ENCODE measurements at regions of chr14 and their contacts with region 1.

Region 1: GRCh38 chr14:75258615-75259466 is 19.8 kb upstream of the FOS start:
- DNase-seq: peak; percentile 100
- H3K4me3 ChIP-seq: peak overlapping the region in 2 of 3 experiments; percentile 21 to 39
- H3K27ac ChIP-seq: peak overlapping the region; percentile 75
- H3K4me1 ChIP-seq: peaks cover 32% of the 10 kb centered on the region
- H3K27me3 ChIP-seq: no peaks in the 10 kb centered on the region
- CTCF ChIP-seq: no peak
- POLR2A ChIP-seq: peak; percentile 7

Region 2: GRCh38 chr14:75126679-75127473 is 132.0 kb before region 1 on chr14 and contains the start of gene NEK9:
- CTCF ChIA-PET with region 1: no interaction called
- POLR2A ChIA-PET with region 1: no interaction called
- dilution Hi-C with region 1: no loop called
- intact Hi-C with region 1: loop called (anchors 1 kb)
- DNase-seq: peak; percentile 89
- H3K4me3 ChIP-seq: peak within 1 kb of the TSS; percentile 36 to 69 (median 62)
- H3K27ac ChIP-seq: peak within 1 kb of the TSS; percentile 95
- H3K4me1 ChIP-seq: peaks cover 45% of the 10 kb centered on the region
- H3K27me3 ChIP-seq: no peaks in the 10 kb centered on the region
- CTCF ChIP-seq: no peak
- POLR2A ChIP-seq: peak; percentile 93
- total RNA-seq, gene NEK9: 65.1 and 69.6 TPM in 2 replicates

Region 3: DNA sequence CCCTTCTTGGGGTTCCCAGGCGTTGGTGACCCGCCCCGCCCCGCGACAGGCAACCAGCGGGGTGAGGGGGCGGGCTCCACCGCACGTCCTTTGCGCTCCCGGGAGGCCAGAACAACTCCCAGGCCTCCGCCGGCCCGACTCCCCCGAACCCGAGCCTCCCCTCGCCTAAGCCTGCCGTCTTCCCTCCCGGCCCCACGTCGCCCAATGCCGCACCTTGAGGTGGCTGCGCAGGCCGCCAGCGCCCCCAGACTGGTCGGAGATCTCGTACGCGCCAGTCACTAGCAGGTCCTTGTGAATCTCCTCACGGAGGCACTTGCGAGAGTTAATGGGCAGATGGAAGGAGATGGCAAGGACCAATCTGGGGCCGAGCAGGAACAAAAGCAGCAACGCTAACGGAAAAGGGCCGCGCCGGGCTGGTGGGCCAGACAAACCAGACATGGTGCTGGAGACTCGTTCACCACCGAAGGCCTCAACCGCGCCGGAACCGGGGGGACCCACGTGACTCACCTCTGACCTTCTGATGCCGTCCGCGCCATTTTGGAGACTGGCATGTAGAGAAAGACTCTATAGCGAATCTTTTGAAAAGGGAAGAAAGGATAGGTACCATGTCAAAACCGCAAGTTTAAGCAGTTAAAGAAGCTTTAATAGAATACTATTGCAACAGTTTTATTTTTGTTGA is 82.6 kb before region 1 on chr14 and contains the start of gene TMED10:
- CTCF ChIA-PET with region 1: interaction called, 3 read pairs
- POLR2A ChIA-PET with region 1: interaction called, 3 read pairs
- dilution Hi-C with region 1: no loop called
- intact Hi-C with region 1: loop called (anchors 1 kb)
- DNase-seq: peak; percentile 90
- H3K4me3 ChIP-seq: peak within 1 kb of the TSS; percentile 44 to 92 (median 83)
- H3K27ac ChIP-seq: peak within 1 kb of the TSS; percentile 94
- H3K4me1 ChIP-seq: peaks cover 8% of the 10 kb centered on the region
- H3K27me3 ChIP-seq: no peaks in the 10 kb centered on the region
- CTCF ChIP-seq: no peak
- POLR2A ChIP-seq: peak; percentile 65
- total RNA-seq, gene TMED10: 313 and 338 TPM in 2 replicates

Region 4: DNA sequence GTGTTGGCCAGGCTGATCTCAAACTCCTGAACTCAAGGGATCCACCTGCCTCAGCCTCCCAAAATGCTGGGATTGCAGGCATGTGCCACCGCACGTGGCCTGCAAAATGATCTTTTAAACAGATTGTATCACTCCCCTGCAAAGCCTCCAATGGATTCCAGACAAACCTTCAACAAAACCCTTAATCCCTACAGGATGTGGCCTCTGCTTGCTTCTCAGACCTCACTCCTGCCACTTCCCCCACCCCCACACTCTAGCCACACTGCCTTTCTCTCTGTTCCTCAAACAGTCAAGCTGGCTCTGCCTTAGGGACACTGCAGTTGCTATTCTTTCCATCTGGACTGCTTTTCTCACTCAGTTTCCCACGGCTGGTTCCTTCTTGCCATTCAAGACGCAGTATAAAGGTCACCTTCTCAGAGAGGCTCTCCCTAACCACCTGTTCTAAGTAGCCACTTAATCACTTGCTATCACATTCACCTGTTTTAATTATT is 35.1 kb before region 1 on chr14:
- CTCF ChIA-PET with region 1: interaction called, 7 read pairs
- POLR2A ChIA-PET with region 1: no interaction called
- dilution Hi-C with region 1: no loop called
- intact Hi-C with region 1: loop called (anchors 1 kb)
- DNase-seq: no peak
- H3K4me3 ChIP-seq: no peak overlapping the region
- H3K27ac ChIP-seq: no peak overlapping the region
- H3K4me1 ChIP-seq: peaks cover 13% of the 10 kb centered on the region
- H3K27me3 ChIP-seq: no peaks in the 10 kb centered on the region
- CTCF ChIP-seq: no peak
- POLR2A ChIP-seq: no peak

Region 5: GRCh38 chr14:75278422-75279161 is 19.8 kb after region 1 on chr14 and contains the start of gene FOS:
- CTCF ChIA-PET with region 1: interaction called, 10 read pairs
- POLR2A ChIA-PET with region 1: interaction called, 9 read pairs
- dilution Hi-C with region 1: no loop called
- intact Hi-C with region 1: loop called (anchors 1 kb)
- DNase-seq: peak; percentile 93
- H3K4me3 ChIP-seq: peak within 1 kb of the TSS; percentile 31 to 85 (median 68)
- H3K27ac ChIP-seq: peak within 1 kb of the TSS; percentile 92
- H3K4me1 ChIP-seq: peaks cover 11% of the 10 kb centered on the region
- H3K27me3 ChIP-seq: no peaks in the 10 kb centered on the region
- CTCF ChIP-seq: no peak
- POLR2A ChIP-seq: peak; percentile 98
- total RNA-seq, gene FOS: 9.2 and 63.2 TPM in 2 replicates

Region 6: DNA sequence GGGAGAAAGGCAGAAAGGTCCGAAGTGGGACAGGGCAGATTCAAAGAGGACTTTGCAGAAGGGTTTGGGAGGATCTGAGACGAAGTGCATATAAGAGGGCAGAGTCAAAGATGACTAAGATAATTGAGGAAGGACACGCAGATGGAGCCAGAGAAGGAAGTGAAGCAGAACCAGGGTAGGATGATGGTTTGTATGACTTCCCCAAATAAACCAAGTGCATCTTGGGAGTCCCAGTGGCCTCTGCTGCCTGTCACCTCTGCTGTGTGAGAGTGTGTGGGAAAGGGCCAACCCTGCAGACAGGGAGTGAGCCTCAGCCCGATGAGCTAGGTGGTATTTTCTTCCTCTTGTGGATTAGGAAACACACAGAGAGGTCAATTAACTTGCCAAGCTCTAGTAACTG is 356.4 kb after region 1 on chr14:
- CTCF ChIA-PET with region 1: no interaction called
- POLR2A ChIA-PET with region 1: no interaction called
- dilution Hi-C with region 1: no loop called
- intact Hi-C with region 1: no loop called
- DNase-seq: no peak
- H3K4me3 ChIP-seq: no peak overlapping the region
- H3K27ac ChIP-seq: no peak overlapping the region
- H3K4me1 ChIP-seq: no peaks in the 10 kb centered on the region
- H3K27me3 ChIP-seq: peaks cover 5 to 13% of the 10 kb centered on the region in 2 experiments
- CTCF ChIP-seq: no peak
- POLR2A ChIP-seq: no peak

Measured in endothelial cell of umbilical vein (primary cell).